CD4-positive, alpha-beta memory T cell (primary cell): ENCODE measurements at regions of chr11 and their contacts with region 1.

Region 1: DNA sequence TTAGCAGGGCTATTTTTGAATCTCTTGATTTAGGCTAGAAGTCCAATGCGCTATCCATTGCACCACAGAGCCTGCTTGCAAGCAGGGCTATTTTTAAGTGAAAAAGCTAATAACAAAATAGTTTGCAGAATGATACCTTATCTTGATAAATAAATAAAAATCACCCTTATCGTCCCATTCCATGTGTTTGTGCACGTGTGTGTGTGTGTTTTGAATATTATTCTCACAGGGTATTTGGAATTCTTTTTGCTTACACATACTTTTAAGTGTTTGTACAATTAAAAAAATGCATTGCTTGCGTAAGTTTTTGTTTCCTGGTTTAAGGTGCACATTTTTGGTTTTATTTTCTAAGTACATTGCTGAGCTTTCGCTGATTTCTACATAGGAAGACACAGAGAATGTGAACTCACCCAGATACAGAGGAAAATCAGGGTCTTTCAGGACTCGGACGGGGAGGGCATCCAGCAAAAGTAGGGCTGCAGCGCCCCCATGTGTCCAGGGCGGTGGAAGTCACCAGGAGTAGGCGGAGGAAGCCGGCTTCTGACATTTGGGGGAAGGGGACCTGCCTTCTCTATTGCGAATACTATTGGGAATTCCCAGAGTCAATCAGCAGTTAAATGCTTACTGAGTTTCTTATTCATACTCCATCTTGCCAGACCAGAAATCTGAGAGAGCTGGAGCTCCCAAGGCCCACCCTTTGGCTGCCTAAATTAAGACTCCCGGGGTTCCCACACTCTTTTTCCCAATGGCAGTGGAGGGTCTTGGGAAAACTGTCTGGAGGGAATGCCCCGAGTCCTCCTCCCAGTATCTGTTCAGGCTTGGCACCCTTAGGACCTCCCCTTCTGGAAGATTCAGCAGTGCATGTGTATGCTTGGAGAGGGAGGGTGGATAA is 27.2 kb downstream of the SLC1A2 start:
- DNase-seq: peak; percentile 74 to 82 (median 78)
- H3K4me3 ChIP-seq: peak overlapping the region in 1 of 2 donors; percentile 16
- H3K4me3 Mint-ChIP-seq: peak overlapping the region; percentile 22 to 79 (median 64)
- H3K27ac ChIP-seq: no peak overlapping the region
- H3K27ac Mint-ChIP-seq: peak overlapping the region in 5 of 7 donors; percentile 5 to 74 (median 47)
- H3K4me1 ChIP-seq: peaks cover 19% of the 10 kb centered on the region
- H3K4me1 Mint-ChIP-seq: peaks cover 13 to 27% (median 19%) of the 10 kb centered on the region in 4 donors
- H3K27me3 ChIP-seq: no peaks in the 10 kb centered on the region
- H3K27me3 Mint-ChIP-seq: no peaks in the 10 kb centered on the region

Region 2: DNA sequence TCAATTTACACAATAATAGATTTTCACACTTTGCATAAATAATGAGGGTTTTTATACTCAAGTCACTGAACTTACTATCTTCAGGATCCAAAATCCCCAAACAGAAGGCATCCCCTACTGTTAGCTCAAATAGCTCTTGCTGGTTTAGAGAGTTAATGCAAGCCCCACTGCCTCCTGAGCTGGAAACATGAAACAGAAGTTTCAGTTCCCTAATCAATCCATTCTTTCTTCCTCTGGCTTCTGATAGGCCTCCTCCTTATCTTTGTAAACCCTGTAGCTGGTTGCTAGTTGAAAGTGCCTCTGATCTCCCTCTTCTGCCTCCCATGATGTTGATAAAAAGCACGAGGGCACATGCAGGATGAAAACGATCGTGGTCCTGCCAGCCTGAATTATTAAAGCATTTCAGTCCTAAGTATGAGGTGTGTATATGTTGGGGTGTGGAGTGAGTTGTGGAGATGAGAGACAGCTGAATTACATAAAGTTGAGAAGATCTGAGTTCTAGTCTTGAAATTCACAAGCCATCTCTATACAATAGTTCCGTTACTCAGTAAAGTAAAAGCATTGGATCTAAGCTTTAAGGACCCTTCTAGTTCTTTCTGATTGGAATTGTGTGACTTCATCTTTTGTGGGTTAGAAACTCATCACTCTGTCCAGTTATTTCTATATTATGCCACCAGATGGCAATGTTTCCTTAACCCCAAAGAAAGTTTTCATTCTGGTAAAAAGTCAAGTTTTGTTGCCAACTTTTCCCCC is 806.3 kb before region 1 on chr11:
- CTCF ChIA-PET with region 1: interaction called, 49 read pairs
- POLR2A ChIA-PET with region 1: no interaction called
- intact Hi-C with region 1: loop called (anchors 1 kb)
- DNase-seq: peak in 4 of 5 donors; percentile 19 to 39 (median 38)
- H3K4me3 ChIP-seq: no peak overlapping the region
- H3K4me3 Mint-ChIP-seq: no peak overlapping the region
- H3K27ac ChIP-seq: no peak overlapping the region
- H3K27ac Mint-ChIP-seq: no peak overlapping the region
- H3K4me1 ChIP-seq: no peaks in the 10 kb centered on the region
- H3K4me1 Mint-ChIP-seq: peaks cover 0 to 3% (median 0%) of the 10 kb centered on the region in 4 donors
- H3K27me3 ChIP-seq: no peaks in the 10 kb centered on the region
- H3K27me3 Mint-ChIP-seq: peaks cover 3 to 6% of the 10 kb centered on the region in 2 donors

Region 3: GRCh38 chr11:34926101-34926830 is 465.9 kb before region 1 on chr11:
- CTCF ChIA-PET with region 1: interaction called, 158 read pairs
- POLR2A ChIA-PET with region 1: interaction called, 6 read pairs
- intact Hi-C with region 1: loop called (anchors 1 kb)
- DNase-seq: peak in 4 of 5 donors; percentile 49 to 57 (median 54)
- H3K4me3 ChIP-seq: no peak overlapping the region
- H3K4me3 Mint-ChIP-seq: no peak overlapping the region
- H3K27ac ChIP-seq: no peak overlapping the region
- H3K27ac Mint-ChIP-seq: peak overlapping the region in 1 of 7 donors; percentile 78
- H3K4me1 ChIP-seq: no peaks in the 10 kb centered on the region
- H3K4me1 Mint-ChIP-seq: peaks cover 8 to 25% (median 15%) of the 10 kb centered on the region in 4 donors
- H3K27me3 ChIP-seq: no peaks in the 10 kb centered on the region
- H3K27me3 Mint-ChIP-seq: no peaks in the 10 kb centered on the region

Region 4: GRCh38 chr11:35144136-35144741 is 247.9 kb before region 1 on chr11:
- CTCF ChIA-PET with region 1: interaction called, 7 read pairs
- POLR2A ChIA-PET with region 1: no interaction called
- intact Hi-C with region 1: loop called (anchors 5 kb)
- DNase-seq: peak; percentile 67 to 90 (median 76)
- H3K4me3 ChIP-seq: peak overlapping the region; percentile 55 to 59
- H3K4me3 Mint-ChIP-seq: peak overlapping the region; percentile 83 to 99 (median 98)
- H3K27ac ChIP-seq: peak overlapping the region; percentile 73
- H3K27ac Mint-ChIP-seq: peak overlapping the region; percentile 93 to 100 (median 95)
- H3K4me1 ChIP-seq: peaks cover 72% of the 10 kb centered on the region
- H3K4me1 Mint-ChIP-seq: peaks cover 60 to 88% (median 70%) of the 10 kb centered on the region in 4 donors
- H3K27me3 ChIP-seq: no peaks in the 10 kb centered on the region
- H3K27me3 Mint-ChIP-seq: no peaks in the 10 kb centered on the region

Region 5: GRCh38 chr11:35237860-35238715 is 154.1 kb before region 1 on chr11:
- CTCF ChIA-PET with region 1: interaction called, 19 read pairs
- POLR2A ChIA-PET with region 1: no interaction called
- intact Hi-C with region 1: loop called (anchors 5 kb)
- DNase-seq: peak; percentile 50 to 64 (median 55)
- H3K4me3 ChIP-seq: no peak overlapping the region
- H3K4me3 Mint-ChIP-seq: peak overlapping the region in 6 of 8 donors; percentile 4 to 66 (median 38)
- H3K27ac ChIP-seq: no peak overlapping the region
- H3K27ac Mint-ChIP-seq: peak overlapping the region; percentile 78 to 97 (median 90)
- H3K4me1 ChIP-seq: peaks cover 73% of the 10 kb centered on the region
- H3K4me1 Mint-ChIP-seq: peaks cover 61 to 94% (median 76%) of the 10 kb centered on the region in 4 donors
- H3K27me3 ChIP-seq: no peaks in the 10 kb centered on the region
- H3K27me3 Mint-ChIP-seq: no peaks in the 10 kb centered on the region

Region 6: DNA sequence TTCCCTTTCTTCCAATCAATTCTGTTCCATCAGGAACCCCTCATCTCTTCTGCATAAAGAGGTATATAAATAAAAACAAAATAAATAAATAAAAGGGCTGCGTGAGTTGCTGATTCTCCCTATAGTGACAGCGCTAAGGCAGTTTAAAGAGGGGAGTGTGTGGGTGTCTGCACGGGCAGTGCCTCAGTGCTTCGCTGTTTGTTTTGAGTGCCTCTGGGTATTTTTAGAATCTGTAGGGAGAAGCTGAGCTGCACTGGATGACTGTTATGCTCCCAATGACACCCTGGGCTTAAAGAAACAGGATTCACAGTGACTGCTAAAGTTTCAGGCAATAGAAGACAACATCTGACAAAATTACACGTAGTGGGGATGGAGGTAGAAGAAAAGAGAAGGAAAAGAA is 11.6 kb before region 1 on chr11:
- CTCF ChIA-PET with region 1: interaction called, 22 read pairs
- POLR2A ChIA-PET with region 1: no interaction called
- intact Hi-C with region 1: no loop called
- DNase-seq: no peak
- H3K4me3 ChIP-seq: no peak overlapping the region
- H3K4me3 Mint-ChIP-seq: no peak overlapping the region
- H3K27ac ChIP-seq: no peak overlapping the region
- H3K27ac Mint-ChIP-seq: peak overlapping the region in 1 of 7 donors; percentile 86
- H3K4me1 ChIP-seq: no peaks in the 10 kb centered on the region
- H3K4me1 Mint-ChIP-seq: peaks cover 0 to 1% (median 0%) of the 10 kb centered on the region in 4 donors
- H3K27me3 ChIP-seq: no peaks in the 10 kb centered on the region
- H3K27me3 Mint-ChIP-seq: peaks cover 0 to 1% of the 10 kb centered on the region in 2 donors